ENCODE measurements at regions of chrX and their contacts with region 1.

Region 1: DNA sequence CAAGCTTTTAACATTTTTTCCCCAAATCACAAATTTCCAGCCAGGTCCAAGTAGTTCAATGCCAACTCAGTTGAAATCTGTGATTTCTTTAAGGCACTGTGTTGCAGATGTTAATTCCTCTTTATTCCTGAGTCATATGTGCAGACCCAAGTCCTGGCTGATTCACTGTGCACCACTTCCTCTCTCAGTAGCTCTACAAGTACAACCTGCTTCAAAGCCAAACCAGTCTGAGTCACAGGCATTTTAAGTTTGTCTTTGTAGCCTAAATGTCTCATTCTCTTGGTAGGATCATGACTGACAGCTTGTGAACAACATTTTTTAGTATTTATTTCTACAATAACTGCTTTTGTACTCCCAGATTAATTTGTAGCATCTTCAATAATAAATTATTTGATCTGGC is 165.6 kb upstream of the S100G start:
- DNase-seq: peak; percentile 69
- H3K4me3 Mint-ChIP-seq: no peak overlapping the region
- H3K27ac Mint-ChIP-seq: no peak overlapping the region
- H3K4me1 Mint-ChIP-seq: peaks cover 15% of the 10 kb centered on the region
- H3K27me3 Mint-ChIP-seq: no peaks in the 10 kb centered on the region

Region 2: DNA sequence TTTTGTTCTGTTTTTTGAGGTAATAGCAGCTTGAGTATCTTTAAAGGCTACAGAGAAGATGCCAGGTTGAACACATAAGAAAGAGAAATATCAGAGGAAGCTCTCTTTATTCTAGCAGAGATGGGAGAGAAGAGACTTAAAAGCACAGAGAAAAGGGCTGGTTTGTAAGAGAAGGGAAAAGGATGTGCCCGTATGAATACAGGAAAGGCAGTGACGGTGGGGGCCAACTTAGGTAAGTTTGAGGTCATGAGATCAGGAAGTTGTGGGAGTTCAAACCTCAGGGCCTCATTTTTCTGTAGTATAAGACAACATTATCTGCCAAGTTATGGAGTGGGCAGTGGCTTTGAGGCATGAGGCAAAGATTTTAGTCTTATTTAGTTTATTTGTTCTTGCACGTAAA is 44.3 kb after region 1 on chrX:
- intact Hi-C with region 1: loop called (anchors 2 kb)
- DNase-seq: peak; percentile 74
- H3K4me3 Mint-ChIP-seq: peak overlapping the region; percentile 69
- H3K27ac Mint-ChIP-seq: peak overlapping the region; percentile 89
- H3K4me1 Mint-ChIP-seq: peaks cover 15% of the 10 kb centered on the region
- H3K27me3 Mint-ChIP-seq: no peaks in the 10 kb centered on the region

Region 3: DNA sequence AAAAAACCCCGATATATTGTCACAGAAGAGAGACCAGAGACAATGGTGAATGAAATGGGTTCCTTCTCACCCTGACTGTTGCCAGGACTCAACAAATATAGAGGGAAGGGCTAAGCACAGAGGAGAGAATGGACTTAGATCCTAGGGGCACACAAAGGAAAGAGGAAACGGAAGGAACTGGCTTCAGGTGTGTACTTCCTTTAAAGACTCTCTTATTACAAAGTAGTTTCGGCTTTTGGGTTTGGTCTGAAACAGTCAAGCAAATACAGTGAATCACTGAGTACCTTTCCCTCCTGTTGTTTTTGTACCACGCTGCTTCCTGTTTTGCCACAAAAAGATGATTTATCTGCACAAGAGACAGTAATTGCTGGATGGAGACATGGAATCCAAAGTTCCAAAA is 119.5 kb after region 1 on chrX:
- intact Hi-C with region 1: loop called (anchors 5 kb)
- DNase-seq: peak; percentile 57
- H3K4me3 Mint-ChIP-seq: peak overlapping the region; percentile 36
- H3K27ac Mint-ChIP-seq: peak overlapping the region; percentile 71
- H3K4me1 Mint-ChIP-seq: peaks cover 14% of the 10 kb centered on the region
- H3K27me3 Mint-ChIP-seq: no peaks in the 10 kb centered on the region